A673 (cell line): ENCODE measurements at regions of chr3 and their contacts with region 1.

Region 1: DNA sequence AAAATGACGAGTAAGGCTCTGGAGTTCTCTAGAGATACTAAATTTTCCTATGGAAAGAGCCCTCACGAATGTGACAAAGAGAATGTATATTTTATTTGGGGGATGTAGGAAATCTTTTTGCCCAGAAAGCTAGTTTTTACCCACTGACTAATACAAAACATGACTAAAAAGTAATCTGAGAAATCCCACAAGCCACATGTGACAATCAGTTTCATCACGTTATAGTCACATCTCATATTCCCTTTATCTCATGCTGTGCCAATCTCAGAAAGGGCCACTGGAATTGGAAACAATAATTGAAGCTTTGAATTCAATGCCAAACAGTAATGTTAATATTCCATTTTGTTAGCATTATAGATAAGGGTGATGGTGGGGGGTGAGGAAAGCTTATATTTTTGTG is 509.0 kb upstream of the GOLIM4 start:
- DNase-seq: no peak
- H3K4me3 ChIP-seq: no peak overlapping the region
- H3K27ac ChIP-seq: no peak overlapping the region
- H3K4me1 ChIP-seq: no peaks in the 10 kb centered on the region
- H3K27me3 ChIP-seq: peaks cover 30% of the 10 kb centered on the region
- CTCF ChIP-seq: no peak

Region 2: GRCh38 chr3:168620826-168621225 is 16.1 kb after region 1 on chr3:
- CTCF ChIA-PET with region 1: no interaction called
- POLR2A ChIA-PET with region 1: interaction called, 12 read pairs
- intact Hi-C with region 1: no loop called
- DNase-seq: peak; percentile 45
- H3K4me3 ChIP-seq: no peak overlapping the region
- H3K27ac ChIP-seq: no peak overlapping the region
- H3K4me1 ChIP-seq: no peaks in the 10 kb centered on the region
- H3K27me3 ChIP-seq: peaks cover 31% of the 10 kb centered on the region
- CTCF ChIP-seq: peak; percentile 60

Region 3: DNA sequence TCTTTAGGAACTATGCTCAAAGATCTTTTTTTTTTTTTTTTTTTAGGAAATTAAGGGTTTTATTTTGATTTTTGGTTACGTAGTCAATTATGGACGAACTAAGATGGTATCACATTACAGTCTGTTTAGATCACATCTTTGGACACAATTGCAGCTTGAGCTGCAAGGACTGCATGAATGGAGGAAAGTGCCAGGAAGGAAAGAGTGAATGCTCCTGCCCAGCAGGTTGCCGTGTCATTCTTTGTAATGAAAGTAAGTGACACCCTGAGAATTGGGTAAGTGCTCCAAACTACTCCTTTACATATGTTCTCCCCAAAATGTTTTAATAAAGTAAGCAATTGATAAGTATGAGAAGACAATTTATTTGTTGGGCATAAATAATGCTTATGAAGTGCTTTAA is 207.5 kb after region 1 on chr3:
- CTCF ChIA-PET with region 1: interaction called, 10 read pairs
- POLR2A ChIA-PET with region 1: no interaction called
- intact Hi-C with region 1: no loop called
- DNase-seq: peak; percentile 60
- H3K4me3 ChIP-seq: no peak overlapping the region
- H3K27ac ChIP-seq: no peak overlapping the region
- H3K4me1 ChIP-seq: no peaks in the 10 kb centered on the region
- H3K27me3 ChIP-seq: no peaks in the 10 kb centered on the region
- CTCF ChIP-seq: no peak